ENCODE measurements at regions of chr2 and their contacts with region 1.

Region 1: DNA sequence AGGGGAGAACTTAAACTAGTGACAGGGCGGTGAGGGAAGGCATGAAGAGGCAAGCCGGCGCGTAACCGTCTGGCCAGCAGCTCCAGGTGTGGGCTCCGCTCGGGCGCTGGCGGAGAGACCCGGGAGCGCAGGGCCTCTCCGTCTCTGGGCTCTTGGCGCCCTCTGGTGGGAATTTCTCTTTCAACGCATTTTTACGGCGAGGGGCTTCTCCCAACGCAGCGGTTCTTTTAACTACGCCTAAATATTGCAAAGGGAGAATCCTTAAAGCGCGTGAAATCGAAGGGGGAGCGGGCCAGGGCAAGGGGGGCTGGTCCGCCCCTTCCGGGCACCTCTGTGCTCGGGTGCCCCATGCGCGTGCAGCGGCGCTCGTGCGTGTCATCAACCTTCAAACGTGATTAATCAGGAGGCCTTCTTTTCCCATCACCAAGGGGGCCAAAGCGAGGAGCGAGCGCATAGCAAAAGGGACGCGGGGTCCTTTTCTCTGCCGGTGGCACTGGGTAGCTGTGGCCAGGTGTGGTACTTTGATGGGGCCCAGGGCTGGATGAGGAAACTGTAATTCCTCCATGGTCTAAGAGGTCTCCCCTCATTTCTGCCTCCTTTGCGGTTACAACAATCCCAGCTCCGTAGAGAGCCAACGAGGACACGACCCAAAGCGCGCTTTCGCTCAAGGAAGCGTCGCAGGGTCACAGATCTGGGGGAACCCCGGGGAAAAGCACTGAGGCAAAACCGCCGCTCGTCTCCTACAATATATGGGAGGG is 762 bp upstream of the GAD1 start:
- DNase-seq: peak; percentile 77
- H3K4me3 Mint-ChIP-seq: peak overlapping the region; percentile 31
- H3K27ac Mint-ChIP-seq: peak overlapping the region; percentile 73
- H3K4me1 Mint-ChIP-seq: peaks cover 59% of the 10 kb centered on the region
- H3K27me3 Mint-ChIP-seq: peaks cover 84% of the 10 kb centered on the region

Region 2: GRCh38 chr2:170324640-170325046 is 491.3 kb before region 1 on chr2:
- CTCF ChIA-PET with region 1: interaction called, 33 read pairs
- DNase-seq: peak; percentile 64
- H3K4me3 Mint-ChIP-seq: no peak overlapping the region
- H3K27ac Mint-ChIP-seq: no peak overlapping the region
- H3K4me1 Mint-ChIP-seq: no peaks in the 10 kb centered on the region
- H3K27me3 Mint-ChIP-seq: peaks cover 4% of the 10 kb centered on the region

Region 3: DNA sequence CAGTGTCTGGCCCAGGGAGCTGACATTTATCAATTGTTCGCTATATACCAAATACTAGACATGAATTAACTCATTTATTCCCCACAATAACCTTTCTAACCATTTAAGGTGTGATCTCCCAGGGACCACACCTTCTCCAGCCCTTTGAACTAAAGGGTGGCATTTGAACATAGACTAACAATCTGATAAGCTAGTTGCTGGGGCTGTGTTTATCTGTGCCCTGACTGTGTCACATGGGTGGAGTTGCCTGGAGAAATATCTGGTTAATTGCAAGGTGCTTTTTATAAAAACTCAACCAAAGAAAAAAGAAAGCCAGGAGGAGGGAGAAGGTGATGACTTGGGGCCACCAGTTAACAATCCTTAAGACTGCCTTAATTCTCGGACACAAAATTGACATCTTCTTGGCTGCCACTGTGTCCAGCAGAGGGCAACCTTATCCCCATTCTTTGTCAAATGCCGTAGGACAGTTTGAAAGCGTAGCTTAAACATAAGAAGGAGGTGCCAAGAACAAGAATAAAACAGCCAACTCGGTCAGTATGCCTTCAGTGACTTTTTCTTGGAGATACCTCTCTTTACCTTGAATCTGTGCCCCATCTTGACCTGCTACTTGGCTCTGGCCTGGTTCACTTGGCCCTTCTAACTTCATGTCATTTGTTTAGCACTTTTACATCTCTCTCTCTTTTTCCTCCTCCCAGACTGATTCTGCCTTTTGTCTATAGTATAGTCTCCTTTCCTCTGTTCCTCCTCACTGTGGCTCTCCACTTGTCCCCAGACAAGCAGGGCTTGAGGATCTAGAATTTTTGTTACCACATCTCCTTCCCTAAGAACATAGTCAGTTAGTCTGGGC is 454.6 kb before region 1 on chr2:
- CTCF ChIA-PET with region 1: interaction called, 22 read pairs
- DNase-seq: peak; percentile 71
- H3K4me3 Mint-ChIP-seq: no peak overlapping the region
- H3K27ac Mint-ChIP-seq: no peak overlapping the region
- H3K4me1 Mint-ChIP-seq: peaks cover 31% of the 10 kb centered on the region
- H3K27me3 Mint-ChIP-seq: peaks cover 22% of the 10 kb centered on the region

Region 4: GRCh38 chr2:170369894-170370293 is 446.0 kb before region 1 on chr2:
- CTCF ChIA-PET with region 1: interaction called, 36 read pairs
- DNase-seq: no peak
- H3K4me3 Mint-ChIP-seq: no peak overlapping the region
- H3K27ac Mint-ChIP-seq: no peak overlapping the region
- H3K4me1 Mint-ChIP-seq: peaks cover 36% of the 10 kb centered on the region
- H3K27me3 Mint-ChIP-seq: peaks cover 46% of the 10 kb centered on the region

Region 5: DNA sequence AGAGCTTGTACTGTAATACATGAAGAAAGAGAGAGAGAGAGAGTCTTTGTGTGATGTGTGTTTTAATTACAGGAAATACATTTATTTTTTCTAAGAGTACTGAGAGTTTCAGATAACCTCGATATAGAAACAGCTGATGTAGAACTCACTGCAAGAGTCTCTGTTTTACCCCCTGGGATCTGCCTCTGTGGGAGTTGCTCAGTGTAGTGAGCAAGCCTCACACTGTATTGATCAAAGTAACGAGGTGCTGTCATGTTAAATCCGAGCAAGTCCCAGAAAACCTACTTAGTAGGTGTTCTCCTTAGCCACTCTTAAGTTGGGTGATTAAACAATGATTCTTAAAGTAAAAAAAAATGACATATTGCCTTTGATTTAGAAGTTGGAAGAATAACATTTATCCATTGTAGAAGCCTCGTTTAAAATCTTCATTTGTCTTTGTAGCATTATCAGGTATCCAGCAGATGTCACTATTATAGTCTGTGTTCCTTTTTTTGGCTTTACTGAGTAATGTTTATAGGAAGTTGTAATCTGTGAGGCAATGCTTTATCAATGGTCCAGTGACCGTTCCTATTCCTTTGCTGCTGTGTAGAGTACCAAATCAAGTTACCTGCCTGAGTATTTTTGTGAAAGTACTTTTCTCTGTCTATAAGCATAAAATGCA is 419.0 kb before region 1 on chr2:
- CTCF ChIA-PET with region 1: interaction called, 10 read pairs
- DNase-seq: no peak
- H3K4me3 Mint-ChIP-seq: no peak overlapping the region
- H3K27ac Mint-ChIP-seq: no peak overlapping the region
- H3K4me1 Mint-ChIP-seq: no peaks in the 10 kb centered on the region
- H3K27me3 Mint-ChIP-seq: peaks cover 42% of the 10 kb centered on the region

Region 6: GRCh38 chr2:170409164-170409535 is 406.8 kb before region 1 on chr2:
- CTCF ChIA-PET with region 1: interaction called, 40 read pairs
- DNase-seq: peak; percentile 83
- H3K4me3 Mint-ChIP-seq: no peak overlapping the region
- H3K27ac Mint-ChIP-seq: no peak overlapping the region
- H3K4me1 Mint-ChIP-seq: peaks cover 7% of the 10 kb centered on the region
- H3K27me3 Mint-ChIP-seq: peaks cover 41% of the 10 kb centered on the region

Region 7: GRCh38 chr2:170711774-170712652 is 103.9 kb before region 1 on chr2:
- CTCF ChIA-PET with region 1: interaction called, 13 read pairs
- DNase-seq: no peak
- H3K4me3 Mint-ChIP-seq: no peak overlapping the region
- H3K27ac Mint-ChIP-seq: peak overlapping the region; percentile 42
- H3K4me1 Mint-ChIP-seq: peaks cover 20% of the 10 kb centered on the region
- H3K27me3 Mint-ChIP-seq: peaks cover 100% of the 10 kb centered on the region

Measured in activated naive CD4-positive, alpha-beta T cell treated with anti-CD3 and anti-CD28 coated beads, Interleukin-2, amount 10 ng/mL, durations not matched to agents 7 days and 5 days (primary cell).